ENCODE measurements at regions of chr11 and their contacts with region 1.

Region 1: DNA sequence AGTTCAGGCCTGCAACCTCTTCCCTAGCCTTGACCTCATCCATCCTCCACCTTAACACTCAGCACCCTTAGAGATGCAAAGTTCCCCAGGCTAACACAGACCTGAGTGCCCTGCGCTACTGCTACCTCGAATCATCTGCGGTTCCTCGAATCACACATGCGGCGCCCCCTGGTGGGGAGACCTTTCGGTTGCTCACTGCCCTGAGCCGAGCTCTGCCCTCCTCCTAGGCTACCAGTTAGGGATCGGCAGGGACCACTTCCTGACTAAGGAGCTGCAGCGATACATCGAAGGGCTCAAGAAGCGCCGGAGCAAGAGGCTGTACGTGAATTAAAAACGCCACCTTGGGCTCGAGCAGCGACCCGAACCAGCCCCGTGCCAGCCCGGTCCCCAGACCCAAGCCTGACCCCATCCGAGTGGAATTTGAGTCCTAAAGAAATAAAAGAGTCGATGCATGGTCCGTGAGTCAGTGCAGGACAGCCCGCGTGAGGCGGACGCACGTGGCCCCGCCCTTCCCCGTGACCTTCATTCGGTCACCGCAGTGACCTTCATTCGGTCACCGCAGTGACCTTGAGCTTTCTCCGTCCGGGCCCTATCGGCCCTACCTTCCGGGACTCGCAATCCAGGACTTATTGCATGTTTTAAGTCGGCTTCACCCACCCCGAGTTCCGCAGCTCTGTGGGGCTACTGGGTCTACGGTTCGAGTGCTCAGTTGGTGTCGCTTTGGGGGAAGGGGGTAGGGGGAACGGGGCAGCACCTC is 830 bp upstream of the ESRRA start:
- DNase-seq: peak; percentile 95
- H3K4me3 Mint-ChIP-seq: peak overlapping the region; percentile 87
- H3K27ac Mint-ChIP-seq: peak overlapping the region; percentile 97
- H3K4me1 Mint-ChIP-seq: peaks cover 48% of the 10 kb centered on the region
- H3K27me3 Mint-ChIP-seq: peaks cover 18% of the 10 kb centered on the region

Region 2: DNA sequence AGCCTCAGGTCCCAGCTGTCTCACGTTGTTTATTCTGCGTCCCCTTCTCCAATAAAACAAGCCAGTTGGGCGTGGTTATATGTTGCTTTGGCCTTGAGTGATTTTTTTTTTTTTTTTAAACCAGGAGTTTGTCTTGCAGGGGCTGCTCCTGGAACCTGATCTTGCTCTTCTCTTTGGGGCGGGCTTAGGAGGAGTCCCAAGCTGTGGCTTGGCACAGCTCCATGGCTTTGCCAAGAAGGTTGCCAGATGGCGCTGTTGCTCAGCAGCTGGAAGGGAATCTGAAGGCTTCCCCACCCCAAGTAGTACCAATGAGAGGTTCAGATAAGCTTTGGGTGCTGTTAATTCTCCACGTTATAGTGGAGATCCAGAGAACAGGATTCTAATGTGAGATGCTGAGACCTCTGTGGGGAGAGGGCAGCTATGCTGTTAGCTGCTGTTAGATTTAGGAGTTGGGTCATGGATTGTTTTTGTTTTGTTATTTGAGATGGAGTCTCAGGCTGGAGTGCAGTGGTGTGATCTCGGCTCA is 100.0 kb before region 1 on chr11:
- CTCF ChIA-PET with region 1: interaction called, 154 read pairs
- POLR2A ChIA-PET with region 1: interaction called, 77 read pairs
- DNase-seq: peak; percentile 84
- H3K4me3 Mint-ChIP-seq: peak overlapping the region; percentile 48
- H3K27ac Mint-ChIP-seq: peak overlapping the region; percentile 81
- H3K4me1 Mint-ChIP-seq: peaks cover 52% of the 10 kb centered on the region
- H3K27me3 Mint-ChIP-seq: no peaks in the 10 kb centered on the region

Region 3: DNA sequence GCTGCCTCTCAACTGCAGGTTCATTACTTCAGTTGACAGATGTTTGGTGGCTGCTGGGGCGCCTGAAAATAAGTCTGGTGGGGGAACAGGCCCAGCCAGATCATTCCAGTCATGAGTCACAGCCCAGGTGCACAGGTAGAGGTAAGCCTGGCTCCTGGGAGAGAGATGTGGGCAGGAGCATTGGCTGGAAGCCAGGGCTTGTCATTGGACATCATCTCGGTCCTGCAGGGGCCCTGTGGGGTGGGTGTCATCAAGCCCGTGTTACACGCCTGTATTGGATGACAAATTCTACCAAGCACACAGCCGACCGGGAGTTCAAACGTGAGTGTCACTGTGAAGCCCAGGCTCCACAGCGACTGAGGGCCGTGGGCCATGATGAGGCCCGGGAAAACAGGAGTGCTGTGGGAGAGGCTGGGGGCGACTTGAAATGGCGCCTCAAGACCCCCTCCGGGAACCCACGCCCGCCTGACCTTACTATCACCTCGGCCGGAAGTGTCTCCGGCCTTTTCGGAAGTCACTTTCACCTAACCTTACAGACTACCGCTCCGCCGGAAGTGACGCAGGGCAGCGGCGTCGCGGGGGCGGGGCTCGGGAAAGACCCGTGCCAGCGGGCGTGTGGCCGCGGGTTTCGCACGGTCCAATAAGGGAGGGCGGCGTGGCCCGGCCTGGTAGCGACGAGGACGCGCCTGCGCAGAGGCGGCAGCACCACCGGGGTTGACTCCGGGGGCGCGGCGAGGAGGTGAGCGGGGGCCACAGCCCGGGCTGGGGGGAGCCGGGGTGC is 63.9 kb before region 1 on chr11 and contains the start of gene FKBP2:
- CTCF ChIA-PET with region 1: interaction called, 13 read pairs
- POLR2A ChIA-PET with region 1: interaction called, 20 read pairs
- DNase-seq: peak; percentile 98
- H3K4me3 Mint-ChIP-seq: peak within 1 kb of the TSS; percentile 90
- H3K27ac Mint-ChIP-seq: peak within 1 kb of the TSS; percentile 92
- H3K4me1 Mint-ChIP-seq: peaks cover 52% of the 10 kb centered on the region
- H3K27me3 Mint-ChIP-seq: no peaks in the 10 kb centered on the region
- total RNA-seq, gene FKBP2: 26.4 to 27.9 TPM

Region 4: DNA sequence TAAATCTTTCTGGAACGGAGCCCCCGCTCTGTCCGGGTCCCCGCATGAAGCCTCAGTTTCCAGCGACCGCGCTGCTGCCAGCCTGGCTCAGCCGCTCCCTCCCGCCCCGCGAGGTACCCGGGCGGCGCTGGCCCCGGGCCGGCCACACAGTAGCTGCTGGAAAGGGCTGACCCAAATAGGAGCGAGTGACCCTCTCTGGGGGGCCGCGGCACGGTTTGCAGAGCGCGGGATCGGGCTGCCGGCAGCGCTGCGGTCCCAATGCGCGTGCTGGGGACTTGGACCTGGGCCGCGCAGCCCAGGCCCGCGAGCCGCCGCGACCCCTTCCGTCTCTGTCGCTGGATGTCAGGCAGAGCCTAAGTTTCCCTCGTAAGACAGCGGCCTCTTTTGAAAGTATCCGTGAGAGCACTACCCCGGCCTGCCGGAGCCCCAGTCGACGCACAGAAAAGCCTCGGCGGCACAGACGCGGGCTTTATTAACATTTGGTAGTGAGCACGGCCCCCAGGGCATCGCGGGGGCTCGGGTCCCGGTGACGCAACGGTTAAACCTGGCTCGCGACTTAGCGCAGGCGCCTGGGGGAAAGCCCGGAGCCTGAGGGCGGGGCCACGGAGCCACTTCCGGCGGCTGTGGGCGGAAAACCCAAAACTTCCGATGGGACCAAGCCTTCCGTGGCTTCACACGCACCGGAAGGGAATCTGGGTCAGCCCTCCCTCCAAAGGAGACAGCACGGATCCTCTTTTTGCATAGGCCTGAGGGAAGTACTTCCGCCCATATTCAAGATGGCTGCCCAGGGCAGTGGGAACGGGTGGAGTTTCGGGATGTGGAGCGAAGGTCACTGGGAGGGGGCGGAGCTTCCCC is 34.9 kb before region 1 on chr11:
- CTCF ChIA-PET with region 1: interaction called, 80 read pairs
- POLR2A ChIA-PET with region 1: interaction called, 53 read pairs
- DNase-seq: peak; percentile 98
- H3K4me3 Mint-ChIP-seq: peak overlapping the region; percentile 85
- H3K27ac Mint-ChIP-seq: peak overlapping the region; percentile 89
- H3K4me1 Mint-ChIP-seq: peaks cover 30% of the 10 kb centered on the region
- H3K27me3 Mint-ChIP-seq: no peaks in the 10 kb centered on the region

Region 5: DNA sequence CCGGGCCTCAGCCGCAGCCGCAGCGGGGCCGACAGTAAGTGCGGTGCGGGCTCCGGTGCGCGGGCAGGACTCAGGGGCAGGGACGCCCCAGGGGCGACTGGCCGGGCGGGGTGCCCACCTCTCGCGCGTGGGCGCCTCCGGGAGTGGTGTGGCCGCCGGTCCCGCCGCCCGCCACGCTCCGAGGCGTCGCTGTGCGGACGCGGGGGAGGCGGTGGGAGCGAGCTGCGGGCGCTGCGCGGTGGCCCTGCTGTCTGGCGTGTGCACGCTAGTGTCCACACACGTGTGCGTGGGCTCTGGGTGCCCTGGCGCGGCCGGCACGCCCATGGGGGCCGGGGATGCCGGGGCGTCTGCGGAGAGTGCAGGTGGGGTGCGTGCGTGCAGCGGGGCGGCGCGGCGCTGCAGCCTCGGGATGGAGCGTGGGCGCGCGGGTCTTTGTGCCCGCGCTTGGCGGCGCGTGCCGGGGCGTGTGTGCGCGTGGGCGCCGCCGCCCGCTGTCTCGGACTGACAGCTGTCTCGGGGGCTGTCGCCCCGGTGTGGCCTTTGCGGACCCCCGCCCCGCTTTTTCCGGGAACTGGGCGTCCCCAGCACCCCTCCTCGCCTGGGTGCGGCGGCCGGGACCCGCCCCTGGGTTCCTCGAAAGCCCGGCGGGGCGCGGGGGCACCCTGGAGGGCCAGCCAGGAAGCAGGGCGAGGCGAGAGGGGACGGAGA is 12.6 kb before region 1 on chr11:
- CTCF ChIA-PET with region 1: interaction called, 13 read pairs
- POLR2A ChIA-PET with region 1: interaction called, 41 read pairs
- DNase-seq: no peak
- H3K4me3 Mint-ChIP-seq: no peak overlapping the region
- H3K27ac Mint-ChIP-seq: no peak overlapping the region
- H3K4me1 Mint-ChIP-seq: peaks cover 12% of the 10 kb centered on the region
- H3K27me3 Mint-ChIP-seq: peaks cover 51% of the 10 kb centered on the region

Region 6: GRCh38 chr11:64331557-64332371 is 27.3 kb after region 1 on chr11:
- CTCF ChIA-PET with region 1: interaction called, 26 read pairs
- POLR2A ChIA-PET with region 1: interaction called, 12 read pairs
- DNase-seq: peak; percentile 89
- H3K4me3 Mint-ChIP-seq: peak overlapping the region; percentile 45
- H3K27ac Mint-ChIP-seq: peak overlapping the region; percentile 83
- H3K4me1 Mint-ChIP-seq: peaks cover 44% of the 10 kb centered on the region
- H3K27me3 Mint-ChIP-seq: no peaks in the 10 kb centered on the region

Measured in activated CD4-positive, alpha-beta memory T cell treated with anti-CD3 and anti-CD28 coated beads, Interleukin-2, amount 10 ng/mL, durations not matched to agents 7 days and 5 days (primary cell).